Posterior cingulate gyrus (tissue), 11 donors: ENCODE measurements at regions of chr2 and their contacts with region 1.

Region 1: DNA sequence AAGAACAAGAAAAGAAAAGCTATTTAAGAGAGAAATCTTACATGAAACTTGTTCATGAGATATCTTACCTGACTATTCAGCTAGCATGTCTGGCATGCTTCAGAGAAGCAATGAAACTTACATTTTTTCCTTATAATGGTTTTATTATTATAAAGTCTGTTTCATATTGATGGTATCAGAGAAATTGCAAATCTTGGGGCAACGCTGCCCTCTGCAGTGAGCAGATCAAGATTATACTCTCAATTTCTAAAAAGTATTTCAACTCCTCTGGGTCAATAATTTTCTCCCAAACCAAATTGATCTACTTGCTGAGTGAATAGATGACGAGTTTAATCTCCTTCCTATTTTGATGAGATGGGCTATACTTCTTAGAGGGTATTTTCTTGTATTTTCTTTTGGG is 235.6 kb downstream of the NUP35 start:
- DNase-seq: peak in 2 of 10 donors; percentile 10 to 15

Region 2: GRCh38 chr2:183248866-183249567 is 110.8 kb before region 1 on chr2:
- intact Hi-C with region 1: loop called (anchors 5 kb)
- DNase-seq: no peak

Region 3: DNA sequence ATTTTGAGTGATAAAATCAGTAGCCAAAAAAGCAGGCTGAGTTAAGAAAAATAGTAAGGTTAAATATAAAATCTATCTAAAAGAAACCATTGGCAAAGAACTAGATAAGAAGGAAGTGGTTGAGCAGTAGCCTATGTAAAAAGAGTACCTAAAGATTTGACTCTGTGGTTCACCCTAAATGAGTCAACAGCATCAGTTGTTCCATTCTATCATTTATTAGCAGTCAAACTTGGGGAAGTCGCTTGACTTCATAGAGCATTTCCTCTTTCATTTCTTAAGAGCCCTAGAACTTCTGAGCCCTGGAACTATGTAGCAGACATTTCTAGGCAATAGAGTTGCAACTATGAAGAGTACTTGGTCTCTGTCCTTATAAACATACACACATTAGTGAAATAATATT is 146.0 kb after region 1 on chr2:
- intact Hi-C with region 1: no loop called
- DNase-seq: no peak

Region 4: GRCh38 chr2:183519371-183520056 is 159.6 kb after region 1 on chr2:
- intact Hi-C with region 1: no loop called
- DNase-seq: no peak

Region 5: DNA sequence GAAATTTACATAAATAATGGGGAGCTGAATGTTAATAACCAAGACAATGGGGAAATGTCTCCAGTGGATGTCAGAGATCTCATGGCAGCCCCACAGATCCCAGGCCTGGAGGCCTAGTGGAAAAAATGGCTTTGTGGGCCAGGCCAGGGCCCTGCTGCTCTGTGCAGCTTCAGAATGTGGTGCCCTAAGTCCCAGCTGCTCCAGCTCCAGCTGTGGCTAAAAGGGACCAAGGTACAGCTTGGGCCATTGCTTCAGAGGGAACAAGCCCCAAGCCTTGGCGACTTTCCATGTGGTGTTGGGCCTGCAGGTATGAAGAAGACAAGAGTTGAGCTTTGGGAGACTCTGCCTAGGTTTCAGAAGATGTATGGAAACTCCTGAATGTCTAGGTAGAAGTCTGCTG is 422.6 kb after region 1 on chr2:
- intact Hi-C with region 1: no loop called
- DNase-seq: peak in 3 of 10 donors; percentile 39 to 77 (median 67)